ENCODE measurements at regions of chr3 and their contacts with region 1.

Region 1: GRCh38 chr3:15859507-15860013 is 61.8 kb upstream of the ANKRD28 start:
- DNase-seq: peak; percentile 86
- ATAC-seq: peak; percentile 94 to 98

Region 2: DNA sequence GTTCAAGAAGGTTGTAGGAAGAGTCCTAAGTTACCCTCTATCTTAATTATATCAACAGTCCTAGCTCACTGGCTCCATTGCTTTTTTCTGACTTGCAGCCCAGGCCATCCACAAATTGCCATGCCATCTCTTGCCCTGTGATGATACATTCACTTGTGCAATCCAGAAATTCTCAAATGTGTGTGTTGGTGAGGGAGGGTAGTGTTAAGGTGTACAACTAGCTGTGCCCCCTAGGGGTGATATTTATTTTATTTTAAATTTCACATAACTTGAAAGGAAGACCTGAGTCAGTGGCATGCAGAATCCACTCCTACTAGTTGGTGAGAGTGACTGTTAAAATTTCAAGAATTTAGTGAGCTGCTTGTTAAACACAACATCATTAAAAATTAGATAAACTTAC is 94.3 kb after region 1 on chr3:
- intact Hi-C with region 1: loop called in 1 of 2 experiments (anchors 10 kb)
- DNase-seq: no peak
- ATAC-seq: no peak

Region 3: GRCh38 chr3:16254916-16255315 is 395.4 kb after region 1 on chr3:
- intact Hi-C with region 1: loop called in 1 of 2 experiments (anchors 5 kb)
- DNase-seq: no peak
- ATAC-seq: no peak

Region 4: DNA sequence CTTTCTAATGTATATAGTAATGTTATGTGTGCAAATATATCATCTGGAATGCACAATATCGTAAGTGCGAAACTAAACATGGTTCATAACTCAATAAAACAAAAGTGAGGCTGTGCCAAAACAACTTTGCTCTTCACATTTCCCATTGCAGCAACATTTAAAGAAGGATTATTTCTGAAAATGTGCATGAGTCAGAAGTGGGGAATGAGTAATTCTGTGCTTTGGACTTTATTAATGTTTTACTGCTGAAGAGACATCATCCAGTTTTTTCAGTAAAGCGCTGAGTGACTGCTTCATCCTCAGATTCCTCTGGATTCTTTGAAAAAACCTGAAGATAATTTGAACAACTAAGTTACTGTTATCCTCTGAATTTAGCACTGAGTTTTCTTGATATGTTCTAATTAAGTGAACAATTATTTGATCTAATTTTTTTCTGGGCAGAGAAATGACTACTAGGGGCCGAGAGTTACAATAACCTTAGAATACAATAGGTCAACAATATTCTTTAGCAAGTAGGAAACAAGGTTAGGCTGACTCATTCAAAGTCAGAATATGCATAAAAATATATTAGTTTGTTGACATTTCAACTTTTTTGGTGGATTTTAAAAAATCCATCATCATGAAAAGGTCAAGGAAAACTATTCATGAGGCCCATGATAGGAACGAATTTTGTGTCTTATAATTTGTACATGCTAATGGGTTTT is 1005.2 kb after region 1 on chr3:
- intact Hi-C with region 1: no loop called
- DNase-seq: no peak
- ATAC-seq: no peak